ENCODE measurements at regions of chr2 and their contacts with region 1.

Region 1: DNA sequence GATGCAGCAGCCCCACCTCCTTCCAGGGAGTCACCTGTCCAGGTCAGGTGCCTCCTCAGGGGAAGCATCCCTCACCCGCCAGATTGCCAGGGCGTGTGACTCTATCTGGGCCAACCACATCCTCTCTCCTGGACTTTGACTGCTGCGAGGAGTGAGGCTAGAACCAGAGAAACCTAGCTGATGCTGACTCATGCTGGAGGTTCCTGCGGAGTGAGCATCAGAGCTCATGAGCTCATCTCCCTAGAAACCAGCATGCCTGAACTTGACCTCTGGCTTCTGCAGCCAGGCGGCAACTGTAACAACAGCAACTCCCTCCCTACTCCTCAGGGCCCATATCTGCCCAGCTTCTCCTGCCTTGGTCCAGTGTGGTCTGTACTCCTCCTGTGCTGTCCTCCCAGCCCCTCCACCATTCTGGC is 28.3 kb upstream of the NT5DC4 start:
- DNase-seq: peak; percentile 43
- ATAC-seq: peak; percentile 74 to 94

Region 2: GRCh38 chr2:112626604-112627059 is 65.9 kb before region 1 on chr2:
- intact Hi-C with region 1: loop called (anchors 2 to 10 kb)
- DNase-seq: peak; percentile 72
- ATAC-seq: peak; percentile 65 to 76

Region 3: GRCh38 chr2:112658820-112659667 is 33.5 kb before region 1 on chr2:
- intact Hi-C with region 1: no loop called
- DNase-seq: no peak
- ATAC-seq: no peak

Region 4: DNA sequence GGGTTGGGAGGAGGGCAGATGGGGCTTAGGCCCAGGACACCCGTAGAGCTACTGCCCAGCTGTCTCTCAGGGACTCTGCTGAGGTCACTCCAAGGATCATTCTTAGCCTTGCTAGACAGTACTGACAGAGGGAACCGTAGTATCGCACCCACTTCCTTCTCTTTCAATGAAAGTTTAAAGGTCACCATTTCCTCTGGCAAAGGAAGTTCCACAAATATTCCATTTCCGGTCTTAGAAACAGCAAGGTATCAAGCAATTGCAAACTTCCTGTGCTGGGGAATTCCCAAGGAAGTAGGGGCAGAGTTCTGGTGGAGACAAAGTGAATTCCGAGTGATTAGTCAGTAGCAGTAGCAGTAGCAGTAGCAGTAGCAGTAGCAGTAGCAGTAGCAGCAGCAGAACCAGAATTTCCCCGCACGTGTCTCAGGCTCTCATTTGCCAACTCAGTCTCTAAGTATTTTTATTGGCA is 119.4 kb after region 1 on chr2:
- intact Hi-C with region 1: no loop called
- DNase-seq: peak; percentile 38
- ATAC-seq: peak; percentile 85 to 86